ENCODE measurements at regions of chr20 and their contacts with region 1.

Region 1: GRCh38 chr20:49699200-49699992 is 14.3 kb downstream of the B4GALT5 start:
- DNase-seq: peak; percentile 64
- H3K4me3 Mint-ChIP-seq: no peak overlapping the region
- H3K27ac Mint-ChIP-seq: peak overlapping the region; percentile 50
- H3K4me1 Mint-ChIP-seq: peaks cover 32% of the 10 kb centered on the region
- H3K27me3 Mint-ChIP-seq: no peaks in the 10 kb centered on the region
- CTCF ChIP-seq: no peak

Region 2: GRCh38 chr20:49484180-49485140 is 214.9 kb before region 1 on chr20:
- CTCF ChIA-PET with region 1: no interaction called
- POLR2A ChIA-PET with region 1: no interaction called
- intact Hi-C with region 1: no loop called
- DNase-seq: peak; percentile 84
- H3K4me3 Mint-ChIP-seq: peak overlapping the region; percentile 69
- H3K27ac Mint-ChIP-seq: no peak overlapping the region
- H3K4me1 Mint-ChIP-seq: peaks cover 7% of the 10 kb centered on the region
- H3K27me3 Mint-ChIP-seq: peaks cover 16% of the 10 kb centered on the region
- CTCF ChIP-seq: peak; percentile 84

Region 3: GRCh38 chr20:49496553-49497397 is 202.6 kb before region 1 on chr20:
- CTCF ChIA-PET with region 1: no interaction called
- POLR2A ChIA-PET with region 1: no interaction called
- intact Hi-C with region 1: no loop called
- DNase-seq: no peak
- H3K4me3 Mint-ChIP-seq: no peak overlapping the region
- H3K27ac Mint-ChIP-seq: no peak overlapping the region
- H3K4me1 Mint-ChIP-seq: no peaks in the 10 kb centered on the region
- H3K27me3 Mint-ChIP-seq: peaks cover 21% of the 10 kb centered on the region
- CTCF ChIP-seq: no peak

Region 4: GRCh38 chr20:49676581-49677291 is 22.7 kb before region 1 on chr20:
- CTCF ChIA-PET with region 1: interaction called, 4 read pairs
- POLR2A ChIA-PET with region 1: interaction called, 25 read pairs
- intact Hi-C with region 1: no loop called
- DNase-seq: peak; percentile 68
- H3K4me3 Mint-ChIP-seq: peak overlapping the region; percentile 22
- H3K27ac Mint-ChIP-seq: peak overlapping the region; percentile 66
- H3K4me1 Mint-ChIP-seq: peaks cover 69% of the 10 kb centered on the region
- H3K27me3 Mint-ChIP-seq: no peaks in the 10 kb centered on the region
- CTCF ChIP-seq: no peak

Region 5: GRCh38 chr20:49685809-49686208 is 13.6 kb before region 1 on chr20:
- CTCF ChIA-PET with region 1: interaction called, 4 read pairs
- POLR2A ChIA-PET with region 1: interaction called, 14 read pairs
- intact Hi-C with region 1: no loop called
- DNase-seq: peak; percentile 53
- H3K4me3 Mint-ChIP-seq: no peak overlapping the region
- H3K27ac Mint-ChIP-seq: no peak overlapping the region
- H3K4me1 Mint-ChIP-seq: peaks cover 47% of the 10 kb centered on the region
- H3K27me3 Mint-ChIP-seq: no peaks in the 10 kb centered on the region
- CTCF ChIP-seq: no peak

Region 6: GRCh38 chr20:49768204-49769047 is 69.0 kb after region 1 on chr20:
- CTCF ChIA-PET with region 1: no interaction called
- POLR2A ChIA-PET with region 1: interaction called, 16 read pairs
- intact Hi-C with region 1: no loop called
- DNase-seq: peak; percentile 100
- H3K4me3 Mint-ChIP-seq: peak overlapping the region; percentile 38
- H3K27ac Mint-ChIP-seq: peak overlapping the region; percentile 93
- H3K4me1 Mint-ChIP-seq: peaks cover 40% of the 10 kb centered on the region
- H3K27me3 Mint-ChIP-seq: no peaks in the 10 kb centered on the region
- CTCF ChIP-seq: no peak